ENCODE measurements at regions of chr1 and their contacts with region 1.

Region 1: DNA sequence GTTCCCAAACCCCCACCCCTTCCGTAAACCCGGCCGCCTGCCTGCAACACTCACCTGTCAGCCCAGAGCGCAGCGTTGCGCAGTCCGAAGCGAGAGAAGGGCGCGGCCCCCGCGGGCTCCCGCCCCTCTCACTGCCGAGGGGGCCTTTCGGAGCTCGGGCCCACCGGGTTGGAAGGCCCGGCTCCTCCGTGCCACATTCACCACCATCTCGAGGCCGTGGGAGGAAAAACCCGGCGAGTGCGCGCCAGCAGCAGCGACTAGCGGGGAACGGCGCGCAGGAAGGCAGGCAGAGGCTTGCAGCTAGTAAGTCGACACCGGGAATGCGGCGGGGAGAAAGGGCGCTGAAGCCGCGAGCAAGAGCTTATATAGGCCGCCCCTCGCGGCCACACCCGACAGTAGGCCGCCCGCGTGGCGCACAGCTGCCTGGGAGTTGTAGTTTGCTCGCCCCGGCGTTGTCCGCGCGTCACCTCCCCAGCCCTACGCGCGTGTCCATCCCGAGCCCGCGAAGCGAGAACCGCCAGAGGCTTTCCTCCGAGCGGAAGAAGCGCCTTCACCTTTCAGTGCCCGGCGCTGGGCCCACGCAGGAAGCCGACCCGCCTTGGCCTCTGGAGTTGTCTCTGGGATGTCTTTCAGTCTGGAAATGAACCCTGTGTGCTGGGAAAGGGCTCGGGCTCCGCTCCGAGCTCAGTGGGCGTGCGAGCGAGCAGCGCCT is 10.4 kb upstream of the RAB42 start:
- DNase-seq: peak; percentile 88
- ATAC-seq: peak; percentile 88
- H3K4me3 ChIP-seq: peak overlapping the region; percentile 95 to 99 (median 96)
- H3K27ac ChIP-seq: peak overlapping the region; percentile 71
- H3K4me1 ChIP-seq: peaks cover 45% of the 10 kb centered on the region
- H3K27me3 ChIP-seq: peaks cover 0 to 3% of the 10 kb centered on the region in 2 experiments; a peak in 1 of 5 replicates
- CTCF ChIP-seq: peak; percentile 23
- EP300 ChIP-seq: no peak
- POLR2A ChIP-seq: peak; percentile 100
- RAD21 ChIP-seq: peak; percentile 62

Region 2: DNA sequence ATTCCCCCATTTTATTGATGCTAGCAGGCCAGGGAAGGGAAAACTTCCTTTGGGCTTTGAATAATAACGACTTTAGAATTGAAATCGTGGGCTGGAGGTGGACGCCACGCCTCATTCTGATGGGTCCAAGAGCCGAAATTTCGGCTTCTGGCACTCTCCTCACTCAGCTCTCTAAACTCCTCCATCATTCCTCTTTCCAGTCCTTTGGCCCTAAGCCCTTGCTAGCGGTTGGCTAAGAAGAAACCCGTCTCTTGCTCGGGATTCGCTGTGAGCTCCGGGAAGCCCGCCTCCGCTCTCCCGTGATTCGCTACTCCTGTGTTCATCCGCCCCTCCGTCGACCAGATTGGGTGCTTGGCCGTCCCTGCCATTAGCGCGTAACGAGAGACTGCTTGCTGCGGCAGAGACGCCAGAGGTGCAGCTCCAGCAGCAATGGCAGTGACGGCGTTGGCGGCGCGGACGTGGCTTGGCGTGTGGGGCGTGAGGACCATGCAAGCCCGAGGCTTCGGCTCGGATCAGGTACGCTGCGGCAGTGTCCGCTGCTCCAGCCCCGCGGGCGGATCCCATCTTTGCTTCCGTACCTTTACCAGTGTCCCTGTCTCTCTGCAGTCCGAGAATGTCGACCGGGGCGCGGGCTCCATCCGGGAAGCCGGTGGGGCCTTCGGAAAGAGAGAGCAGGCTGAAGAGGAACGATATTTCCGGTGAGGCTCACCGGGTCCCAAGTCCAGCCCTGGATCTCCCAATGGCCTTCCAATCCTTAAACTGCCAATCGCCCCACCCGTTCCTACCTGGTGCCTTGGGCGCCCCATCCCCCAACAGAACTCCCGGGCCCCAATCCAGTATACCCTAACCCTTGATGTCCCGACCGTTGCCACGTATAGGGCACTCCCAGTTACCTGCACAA is 345.7 kb before region 1 on chr1 and contains the start of gene ATP5IF1:
- CTCF ChIA-PET with region 1: no interaction called
- POLR2A ChIA-PET with region 1: interaction called, 7 read pairs
- in situ Hi-C with region 1: loop called (anchors 25 kb)
- intact Hi-C with region 1: no loop called
- DNase-seq: peak; percentile 96
- ATAC-seq: peak; percentile 96
- H3K4me3 ChIP-seq: peak within 1 kb of the TSS; percentile 82 to 95 (median 93)
- H3K27ac ChIP-seq: peak within 1 kb of the TSS; percentile 91
- H3K4me1 ChIP-seq: peaks cover 40% of the 10 kb centered on the region
- H3K27me3 ChIP-seq: peaks cover 0 to 2% of the 10 kb centered on the region in 2 experiments; a peak in 1 of 5 replicates
- CTCF ChIP-seq: no peak; the same call in 1 of the 2 replicates
- EP300 ChIP-seq: no peak
- POLR2A ChIP-seq: peak; percentile 95 to 99
- RAD21 ChIP-seq: no peak; the same call in 1 of the 2 replicates
- total RNA-seq, gene ATP5IF1: 131 and 143 TPM in 2 replicates

Region 3: GRCh38 chr1:28505406-28506187 is 76.1 kb before region 1 on chr1 and contains the start of gene RCC1:
- CTCF ChIA-PET with region 1: no interaction called
- POLR2A ChIA-PET with region 1: interaction called, 62 read pairs
- in situ Hi-C with region 1: no loop called
- intact Hi-C with region 1: no loop called
- DNase-seq: peak; percentile 99
- ATAC-seq: peak; percentile 83
- H3K4me3 ChIP-seq: peak within 1 kb of the TSS; percentile 95 to 97 (median 96)
- H3K27ac ChIP-seq: peak within 1 kb of the TSS; percentile 86
- H3K4me1 ChIP-seq: peaks cover 36% of the 10 kb centered on the region
- H3K27me3 ChIP-seq: no peaks in the 10 kb centered on the region; a peak in 1 of 5 replicates
- CTCF ChIP-seq: no peak
- EP300 ChIP-seq: no peak
- POLR2A ChIP-seq: peak; percentile 98 to 100
- RAD21 ChIP-seq: no peak
- total RNA-seq, gene RCC1: 80.8 and 102 TPM in 2 replicates

Region 4: GRCh38 chr1:28560886-28561285 is 20.8 kb before region 1 on chr1:
- CTCF ChIA-PET with region 1: no interaction called
- POLR2A ChIA-PET with region 1: interaction called, 25 read pairs
- in situ Hi-C with region 1: no loop called
- intact Hi-C with region 1: no loop called
- DNase-seq: no peak
- ATAC-seq: no peak
- H3K4me3 ChIP-seq: no peak overlapping the region
- H3K27ac ChIP-seq: no peak overlapping the region
- H3K4me1 ChIP-seq: no peaks in the 10 kb centered on the region
- H3K27me3 ChIP-seq: no peaks in the 10 kb centered on the region
- CTCF ChIP-seq: no peak
- EP300 ChIP-seq: no peak
- POLR2A ChIP-seq: no peak
- RAD21 ChIP-seq: no peak

Region 5: GRCh38 chr1:28602536-28603439 is 21.1 kb after region 1 on chr1:
- CTCF ChIA-PET with region 1: no interaction called
- POLR2A ChIA-PET with region 1: interaction called, 39 read pairs
- in situ Hi-C with region 1: no loop called
- intact Hi-C with region 1: no loop called
- DNase-seq: peak; percentile 81
- ATAC-seq: peak; percentile 55
- H3K4me3 ChIP-seq: no peak overlapping the region
- H3K27ac ChIP-seq: no peak overlapping the region
- H3K4me1 ChIP-seq: peaks cover 40% of the 10 kb centered on the region
- H3K27me3 ChIP-seq: no peaks in the 10 kb centered on the region
- CTCF ChIP-seq: peak; percentile 85
- EP300 ChIP-seq: 0 out of 4 replicates have a peak, but pooled peaks of 1 of the 2 experiments have one; percentile 20
- POLR2A ChIP-seq: no peak
- RAD21 ChIP-seq: peak; percentile 78

Region 6: DNA sequence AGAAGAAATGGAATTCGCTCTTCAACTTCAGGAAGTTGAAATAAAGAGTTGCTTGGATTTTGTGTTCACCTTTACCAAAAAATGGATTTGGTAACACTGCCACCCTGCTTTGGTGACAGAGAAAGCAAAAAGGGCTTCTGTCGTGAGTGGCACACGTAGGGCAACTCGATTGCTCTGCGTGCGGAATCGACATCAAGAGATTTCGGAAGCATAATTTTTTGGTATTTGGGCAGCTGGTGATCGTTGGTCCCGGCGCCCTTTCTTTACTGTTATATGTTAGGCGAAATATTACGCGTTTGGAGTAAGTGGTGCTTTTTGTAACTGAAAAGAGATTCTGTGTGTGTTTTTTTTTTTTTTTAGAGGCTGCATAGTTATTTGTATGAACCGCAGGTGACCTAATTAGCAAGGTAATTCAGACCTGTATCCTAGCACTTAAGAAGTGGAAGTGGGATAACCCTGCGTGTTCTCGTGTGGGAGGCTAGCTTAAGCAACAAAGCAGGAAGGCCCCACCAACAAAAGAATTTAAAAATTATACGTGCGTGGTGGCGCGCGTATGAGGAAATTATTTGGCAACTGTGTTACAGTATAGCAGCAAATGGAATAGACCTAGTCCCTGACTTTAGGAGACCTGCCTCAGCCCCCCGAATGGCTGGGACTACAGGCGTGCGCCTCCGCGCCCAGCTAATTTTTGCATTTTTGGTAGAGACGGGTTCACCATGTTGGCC is 66.9 kb after region 1 on chr1 and contains the start of gene RNU11:
- CTCF ChIA-PET with region 1: no interaction called
- POLR2A ChIA-PET with region 1: interaction called, 44 read pairs
- in situ Hi-C with region 1: no loop called
- intact Hi-C with region 1: no loop called
- DNase-seq: peak; percentile 95
- ATAC-seq: peak; percentile 81
- H3K4me3 ChIP-seq: peak within 1 kb of the TSS; percentile 56 to 81 (median 68)
- H3K27ac ChIP-seq: peak within 1 kb of the TSS; percentile 100
- H3K4me1 ChIP-seq: peaks cover 56% of the 10 kb centered on the region
- H3K27me3 ChIP-seq: no peaks in the 10 kb centered on the region
- CTCF ChIP-seq: no peak; the same call in none of the 2 replicates
- EP300 ChIP-seq: peak in 1 of 2 experiments; percentile 77; a peak in 3 of 4 replicates
- POLR2A ChIP-seq: peak; percentile 99 to 100
- RAD21 ChIP-seq: peak; percentile 43
- total RNA-seq, gene RNU11: not detected in 2 replicates